Right lobe of liver (tissue), 6 donors: ENCODE measurements at regions of chr11 and their contacts with region 1.

Region 1: DNA sequence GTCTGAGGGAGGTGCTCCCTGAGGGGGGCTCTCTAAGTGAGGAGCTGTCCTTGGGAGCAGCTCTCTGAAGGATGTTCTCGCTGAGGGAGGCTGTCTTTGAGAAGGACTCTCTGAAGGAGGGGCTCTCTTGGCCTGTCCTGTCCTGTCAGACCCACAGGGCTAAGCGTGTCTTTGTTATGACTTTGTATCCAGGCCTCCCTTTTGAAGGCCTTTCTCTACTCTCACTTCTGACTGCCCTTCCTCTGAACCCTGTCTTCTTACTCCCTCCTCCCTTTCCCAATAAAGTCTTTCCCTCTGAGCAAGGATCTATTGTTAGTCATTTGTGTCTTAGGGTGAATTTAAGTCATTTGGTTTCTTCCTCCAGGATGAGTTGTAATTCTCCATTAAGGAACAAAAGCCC is 330.1 kb upstream of the PLET1 start:
- DNase-seq: no peak
- ATAC-seq: no peak
- H3K4me3 ChIP-seq: no peak overlapping the region
- H3K27ac ChIP-seq: no peak overlapping the region
- H3K4me1 ChIP-seq: no peaks in the 10 kb centered on the region
- H3K27me3 ChIP-seq: no peaks in the 10 kb centered on the region
- CTCF ChIP-seq: no peak
- POLR2A ChIP-seq: no peak

Region 2: GRCh38 chr11:112856591-112856990 is 265.8 kb after region 1 on chr11:
- intact Hi-C with region 1: no loop called
- DNase-seq: no peak
- ATAC-seq: no peak
- H3K4me3 ChIP-seq: no peak overlapping the region
- H3K27ac ChIP-seq: no peak overlapping the region
- H3K4me1 ChIP-seq: no peaks in the 10 kb centered on the region
- H3K27me3 ChIP-seq: no peaks in the 10 kb centered on the region
- CTCF ChIP-seq: no peak
- POLR2A ChIP-seq: no peak

Region 3: DNA sequence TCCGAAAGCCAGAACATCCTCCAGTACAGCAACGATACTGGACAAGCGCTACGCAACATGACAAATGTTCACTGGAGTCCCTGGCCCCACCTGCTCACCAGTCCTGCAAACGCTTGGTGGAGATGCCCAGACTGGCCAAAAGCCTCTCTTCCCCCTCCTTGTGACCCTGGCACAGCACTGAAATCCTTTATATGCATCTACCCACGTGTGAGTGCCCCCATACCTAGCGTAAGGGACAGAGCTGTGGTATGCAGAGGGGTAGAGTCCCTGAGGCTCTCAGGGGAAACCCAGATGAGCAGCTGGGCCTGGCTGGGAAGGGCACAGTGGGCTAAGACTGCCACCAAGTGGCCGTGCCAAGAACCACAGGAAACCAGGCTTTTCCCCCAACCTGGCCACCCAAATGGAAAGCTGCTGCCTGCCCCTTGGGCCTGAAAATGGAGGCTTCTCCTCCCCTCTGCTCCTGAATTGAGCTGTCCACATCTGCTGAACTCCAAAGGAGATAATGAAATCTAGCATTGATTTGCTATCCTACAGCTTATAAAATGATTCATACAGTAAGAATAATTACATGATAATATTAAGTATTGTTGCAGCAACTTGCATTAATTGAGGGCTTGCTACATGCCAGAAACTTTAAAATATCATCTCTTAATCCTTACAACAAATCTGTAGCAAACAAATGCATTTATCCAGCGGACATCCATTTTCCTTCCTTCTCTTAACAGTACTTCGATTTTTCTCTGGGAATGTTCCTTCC is 698.8 kb after region 1 on chr11:
- intact Hi-C with region 1: loop called (anchors 5 kb)
- DNase-seq: peak; percentile 61 to 68 (median 64)
- ATAC-seq: peak; percentile 93 to 99 (median 96)
- H3K4me3 ChIP-seq: no peak overlapping the region
- H3K27ac ChIP-seq: no peak overlapping the region
- H3K4me1 ChIP-seq: no peaks in the 10 kb centered on the region
- H3K27me3 ChIP-seq: no peaks in the 10 kb centered on the region
- CTCF ChIP-seq: peak; percentile 87 to 92 (median 90)
- POLR2A ChIP-seq: no peak